Colonic mucosa (tissue), 4 donors: ENCODE measurements at regions of chr5 and their contacts with region 1.

Region 1: GRCh38 chr5:147369742-147370374 is 135.0 kb downstream of the STK32A start:
- DNase-seq: no peak
- H3K4me3 ChIP-seq: no peak overlapping the region
- H3K27ac ChIP-seq: no peak overlapping the region
- H3K4me1 ChIP-seq: no peaks in the 10 kb centered on the region
- H3K27me3 ChIP-seq: no peaks in the 10 kb centered on the region
- CTCF ChIP-seq: peak; percentile 41

Region 2: DNA sequence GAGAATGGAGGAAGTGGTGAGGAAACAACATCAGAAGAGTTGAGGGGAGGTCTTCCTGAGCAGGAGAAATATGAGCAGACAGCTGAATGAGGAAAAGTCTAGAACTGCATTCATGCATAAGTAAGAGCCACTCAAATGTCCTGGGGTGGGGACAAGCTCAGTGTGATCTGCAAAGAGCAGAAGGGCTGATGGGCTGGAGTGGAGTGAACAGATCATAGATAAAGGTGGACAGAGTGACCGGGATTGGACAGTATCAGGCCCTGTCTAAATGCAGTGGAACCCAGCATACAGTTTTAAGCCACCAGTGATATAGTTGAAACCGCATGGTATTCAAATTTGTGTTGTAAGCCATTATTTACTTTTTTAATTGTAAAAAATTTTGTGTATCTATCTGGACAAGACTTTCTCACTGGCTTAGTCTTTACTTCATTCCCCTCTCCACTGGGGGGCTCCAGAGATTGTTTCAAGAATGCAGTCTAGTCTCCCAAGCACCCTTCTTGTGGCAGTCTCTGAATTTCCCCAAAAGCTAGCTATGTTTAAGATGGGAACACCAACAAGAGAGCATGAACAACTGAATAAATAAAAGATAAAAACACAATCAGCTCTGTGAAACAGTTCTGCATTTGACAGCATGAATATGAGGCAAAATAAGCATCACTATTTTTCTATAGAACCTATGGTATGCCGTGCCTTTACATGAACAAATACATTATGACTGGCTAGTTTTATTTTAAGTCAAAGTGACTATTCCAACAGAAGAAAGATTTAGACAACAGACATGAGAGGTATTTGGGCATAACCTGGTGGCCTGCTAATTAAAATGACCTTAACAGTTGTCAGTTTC is 145.7 kb before region 1 on chr5:
- intact Hi-C with region 1: loop called (anchors 5 kb)
- DNase-seq: peak; percentile 38
- H3K4me3 ChIP-seq: no peak overlapping the region
- H3K27ac ChIP-seq: no peak overlapping the region
- H3K4me1 ChIP-seq: no peaks in the 10 kb centered on the region
- H3K27me3 ChIP-seq: no peaks in the 10 kb centered on the region
- CTCF ChIP-seq: peak; percentile 62